GM12878 (cell line): ENCODE measurements at regions of chr3 and their contacts with region 1.

Region 1: DNA sequence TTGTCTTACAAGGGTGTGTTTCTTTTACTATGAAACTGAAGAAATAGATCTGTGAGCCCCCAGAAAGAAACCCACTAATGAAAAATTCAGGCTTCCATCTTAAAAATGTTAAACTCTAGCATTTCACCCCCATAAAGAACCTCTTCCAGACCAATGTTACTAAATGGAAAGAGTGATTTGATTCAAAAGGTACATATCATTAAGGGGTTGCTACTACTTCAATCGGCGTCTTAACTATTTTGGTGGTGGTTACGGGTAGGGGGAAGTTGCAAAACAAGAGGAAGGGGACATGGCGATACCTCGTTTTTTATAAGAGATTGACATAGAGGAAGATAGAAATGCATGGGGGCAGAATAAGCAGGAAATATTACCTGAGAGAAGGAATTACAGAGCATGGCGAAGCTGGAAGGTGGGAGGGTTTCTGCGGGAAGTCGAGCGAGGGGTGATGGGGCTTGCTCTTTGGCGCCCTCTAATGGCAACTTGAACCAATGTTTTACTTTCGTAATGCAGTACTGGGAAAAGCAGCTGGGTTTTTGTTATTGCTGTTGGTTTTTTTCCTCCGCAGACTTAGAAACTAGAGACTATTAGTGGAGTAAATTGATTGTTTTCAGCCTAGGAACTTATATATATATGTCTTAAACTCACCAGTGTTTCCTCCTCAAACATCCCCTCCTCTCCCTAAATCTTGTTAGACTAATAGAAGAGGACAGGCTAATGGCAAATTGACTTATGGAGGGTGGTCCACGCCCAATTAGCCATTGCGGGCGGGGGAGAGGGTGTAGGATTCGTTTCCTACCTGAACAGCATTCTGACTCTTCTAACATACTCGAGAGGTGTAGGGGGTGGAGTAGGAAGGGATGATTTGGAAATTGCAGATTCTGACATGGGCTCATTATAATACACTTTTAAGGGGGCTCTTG is 11.3 kb upstream of the SOX2 start:
- DNase-seq: peak; percentile 21
- ATAC-seq: peak; percentile 83
- H3K4me3 ChIP-seq: no peak overlapping the region
- H3K27ac ChIP-seq: no peak overlapping the region
- H3K4me1 ChIP-seq: no peaks in the 10 kb centered on the region
- H3K27me3 ChIP-seq: peaks cover 10 to 25% of the 10 kb centered on the region in 2 experiments
- CTCF ChIP-seq: peak; percentile 82 to 86 (median 85)
- EP300 ChIP-seq: no peak
- POLR2A ChIP-seq: no peak
- RAD21 ChIP-seq: peak; percentile 49

Region 2: GRCh38 chr3:180802837-180803236 is 897.6 kb before region 1 on chr3:
- CTCF ChIA-PET with region 1: interaction called, 3 read pairs
- POLR2A ChIA-PET with region 1: no interaction called
- RAD21 ChIA-PET with region 1: no interaction called
- SMC1A ChIA-PET with region 1: no interaction called
- in situ Hi-C with region 1: no loop called
- intact Hi-C with region 1: loop called (anchors 10 kb)
- DNase-seq: no peak
- ATAC-seq: peak; percentile 55; the same call in 2 of the 3 replicates
- H3K4me3 ChIP-seq: no peak overlapping the region
- H3K27ac ChIP-seq: no peak overlapping the region
- H3K4me1 ChIP-seq: no peaks in the 10 kb centered on the region
- H3K27me3 ChIP-seq: no peaks in the 10 kb centered on the region
- CTCF ChIP-seq: peak; percentile 27 to 43 (median 40); a peak in 4 of 6 replicates
- EP300 ChIP-seq: no peak
- POLR2A ChIP-seq: no peak
- RAD21 ChIP-seq: peak; percentile 68

Region 3: DNA sequence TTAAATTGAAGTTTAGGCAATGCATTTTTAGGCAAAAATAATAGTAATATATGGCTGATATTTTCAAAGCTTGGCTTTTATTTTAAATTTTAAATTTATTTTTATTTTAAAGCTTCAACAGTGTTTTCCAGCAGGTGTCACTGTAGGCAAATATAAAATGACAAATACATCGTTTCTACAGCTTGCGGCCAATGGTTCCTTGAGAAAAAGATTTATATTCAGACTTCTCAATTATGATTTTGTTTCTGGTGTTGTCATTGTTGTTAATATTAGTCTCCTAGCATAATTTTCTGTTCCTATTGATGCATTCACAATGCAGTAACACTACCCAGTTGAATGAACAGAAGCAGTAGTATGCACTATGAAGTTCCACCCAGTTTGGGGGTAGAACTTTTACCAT is 490.2 kb before region 1 on chr3:
- CTCF ChIA-PET with region 1: interaction called, 12 read pairs
- POLR2A ChIA-PET with region 1: no interaction called
- RAD21 ChIA-PET with region 1: interaction called, 6 read pairs
- SMC1A ChIA-PET with region 1: interaction called, 9 read pairs
- in situ Hi-C with region 1: loop called (anchors 10 kb)
- intact Hi-C with region 1: loop called (anchors 1 kb)
- DNase-seq: no peak
- ATAC-seq: no peak
- H3K4me3 ChIP-seq: no peak overlapping the region
- H3K27ac ChIP-seq: no peak overlapping the region
- H3K4me1 ChIP-seq: no peaks in the 10 kb centered on the region
- H3K27me3 ChIP-seq: no peaks in the 10 kb centered on the region; a peak in 1 of 4 replicates
- CTCF ChIP-seq: no peak; a peak in 1 of 6 replicates
- EP300 ChIP-seq: no peak
- POLR2A ChIP-seq: no peak
- RAD21 ChIP-seq: peak; percentile 48; the same call in 1 of the 2 replicates

Region 4: GRCh38 chr3:181683563-181683962 is 16.9 kb before region 1 on chr3:
- CTCF ChIA-PET with region 1: interaction called, 36 read pairs
- POLR2A ChIA-PET with region 1: no interaction called
- RAD21 ChIA-PET with region 1: no interaction called
- SMC1A ChIA-PET with region 1: interaction called, 3 read pairs
- in situ Hi-C with region 1: no loop called
- intact Hi-C with region 1: no loop called
- DNase-seq: no peak
- ATAC-seq: no peak
- H3K4me3 ChIP-seq: no peak overlapping the region
- H3K27ac ChIP-seq: no peak overlapping the region
- H3K4me1 ChIP-seq: no peaks in the 10 kb centered on the region
- H3K27me3 ChIP-seq: no peaks in the 10 kb centered on the region
- CTCF ChIP-seq: no peak
- EP300 ChIP-seq: no peak
- POLR2A ChIP-seq: no peak
- RAD21 ChIP-seq: no peak

Region 5: DNA sequence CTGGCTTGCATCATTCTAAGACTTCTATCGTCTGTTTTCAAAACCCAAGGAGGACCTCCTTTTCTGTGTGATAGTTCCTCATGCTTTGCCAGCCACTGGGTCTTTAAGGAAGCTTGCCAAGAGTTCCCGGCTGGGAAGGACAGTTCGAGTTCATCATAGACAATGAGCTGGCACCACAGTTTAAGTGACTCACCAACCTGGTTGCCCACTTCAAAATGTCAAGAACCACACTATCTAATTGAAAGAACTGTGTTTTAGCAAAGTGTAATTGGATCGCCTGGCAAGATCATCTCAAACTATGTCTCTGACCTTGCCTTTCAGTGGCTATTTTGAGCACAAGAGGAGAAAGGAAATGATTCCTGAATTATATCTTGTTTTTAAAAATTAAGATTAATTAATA is 39.2 kb after region 1 on chr3:
- CTCF ChIA-PET with region 1: interaction called, 11 read pairs
- POLR2A ChIA-PET with region 1: no interaction called
- RAD21 ChIA-PET with region 1: no interaction called
- SMC1A ChIA-PET with region 1: no interaction called
- in situ Hi-C with region 1: no loop called
- intact Hi-C with region 1: no loop called
- DNase-seq: no peak
- ATAC-seq: no peak
- H3K4me3 ChIP-seq: no peak overlapping the region
- H3K27ac ChIP-seq: no peak overlapping the region
- H3K4me1 ChIP-seq: no peaks in the 10 kb centered on the region
- H3K27me3 ChIP-seq: no peaks in the 10 kb centered on the region
- CTCF ChIP-seq: no peak
- EP300 ChIP-seq: no peak
- POLR2A ChIP-seq: no peak
- RAD21 ChIP-seq: no peak

Region 6: DNA sequence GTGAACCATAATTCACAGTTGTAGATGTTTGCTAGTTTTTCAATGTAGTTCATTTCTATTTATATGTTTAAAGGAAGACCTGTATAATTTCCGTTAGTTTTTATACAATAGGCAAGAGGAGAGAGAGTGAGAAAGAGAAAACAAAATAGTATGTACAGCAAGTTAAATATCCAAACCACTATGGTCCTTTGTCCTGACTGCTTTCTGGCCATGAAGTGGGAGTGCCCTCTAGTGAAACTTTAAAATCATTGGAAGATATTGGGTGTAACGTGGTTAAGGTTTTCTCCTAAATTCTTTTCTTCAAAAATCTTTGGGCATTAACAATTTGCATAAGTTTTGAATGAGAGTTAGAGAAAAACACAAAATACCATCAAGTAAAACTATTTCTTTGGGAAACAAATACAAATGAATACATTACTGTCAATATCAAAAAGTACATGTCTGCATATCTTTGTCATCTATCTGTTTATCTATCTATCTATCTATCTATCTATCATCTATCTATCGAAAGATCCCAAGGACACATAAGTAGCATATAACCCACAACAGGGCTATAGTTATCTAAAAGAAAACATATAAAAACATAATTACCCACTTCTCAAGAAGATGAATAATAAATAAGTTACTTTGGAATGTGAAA is 558.2 kb after region 1 on chr3:
- CTCF ChIA-PET with region 1: no interaction called
- POLR2A ChIA-PET with region 1: no interaction called
- RAD21 ChIA-PET with region 1: no interaction called
- SMC1A ChIA-PET with region 1: no interaction called
- in situ Hi-C with region 1: loop called (anchors 10 kb)
- intact Hi-C with region 1: no loop called
- DNase-seq: no peak
- ATAC-seq: peak; percentile 55; the same call in 2 of the 3 replicates
- H3K4me3 ChIP-seq: no peak overlapping the region
- H3K27ac ChIP-seq: no peak overlapping the region
- H3K4me1 ChIP-seq: no peaks in the 10 kb centered on the region
- H3K27me3 ChIP-seq: no peaks in the 10 kb centered on the region; a peak in 1 of 4 replicates
- CTCF ChIP-seq: peak; percentile 36 to 57 (median 38); a peak in 4 of 6 replicates
- EP300 ChIP-seq: no peak
- POLR2A ChIP-seq: no peak
- RAD21 ChIP-seq: peak; percentile 96